SK-N-SH (cell line): ENCODE measurements at regions of chr3 and their contacts with region 1.

Region 1: DNA sequence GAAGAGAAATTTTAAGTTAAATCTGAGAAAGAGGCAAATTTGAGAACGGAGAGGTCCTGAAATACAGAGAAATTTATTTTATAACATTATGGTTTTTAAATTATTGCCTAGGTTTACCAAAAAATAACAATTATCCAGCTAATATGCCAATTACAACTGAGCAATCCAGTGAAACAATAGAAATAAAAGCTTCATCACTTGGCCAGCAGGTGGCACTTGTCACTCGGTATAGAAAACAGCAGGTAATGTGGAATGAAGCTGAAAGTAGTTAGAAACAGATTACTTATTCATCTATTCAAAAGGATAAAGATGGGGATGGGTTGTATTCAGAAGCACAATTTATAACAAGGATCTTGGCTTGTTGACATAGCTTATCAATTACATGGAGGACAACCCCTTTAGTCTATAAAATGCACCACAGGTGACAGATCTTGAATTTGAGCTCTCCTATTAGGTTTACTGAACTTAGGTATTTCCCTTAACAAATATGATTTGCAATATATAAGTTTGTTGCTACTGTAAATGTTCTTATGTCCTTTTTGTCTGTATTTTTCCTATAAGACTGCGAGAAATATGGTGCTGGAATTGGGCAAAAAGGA is 70.1 kb upstream of the GUCA1C start:
- DNase-seq: peak; percentile 27
- H3K4me3 ChIP-seq: no peak overlapping the region; a peak in 1 of 4 replicates
- H3K27ac ChIP-seq: no peak overlapping the region
- H3K4me1 ChIP-seq: no peaks in the 10 kb centered on the region
- H3K27me3 ChIP-seq: no peaks in the 10 kb centered on the region; the same call in 1 of the 2 replicates
- CTCF ChIP-seq: peak; percentile 86
- EP300 ChIP-seq: no peak
- RAD21 ChIP-seq: peak; percentile 74

Region 2: GRCh38 chr3:109005443-109005842 is 18.3 kb before region 1 on chr3:
- CTCF ChIA-PET with region 1: interaction called, 38 read pairs
- POLR2A ChIA-PET with region 1: no interaction called
- DNase-seq: no peak
- H3K4me3 ChIP-seq: no peak overlapping the region
- H3K27ac ChIP-seq: no peak overlapping the region
- H3K4me1 ChIP-seq: no peaks in the 10 kb centered on the region
- H3K27me3 ChIP-seq: no peaks in the 10 kb centered on the region
- CTCF ChIP-seq: no peak
- EP300 ChIP-seq: no peak
- RAD21 ChIP-seq: no peak

Region 3: DNA sequence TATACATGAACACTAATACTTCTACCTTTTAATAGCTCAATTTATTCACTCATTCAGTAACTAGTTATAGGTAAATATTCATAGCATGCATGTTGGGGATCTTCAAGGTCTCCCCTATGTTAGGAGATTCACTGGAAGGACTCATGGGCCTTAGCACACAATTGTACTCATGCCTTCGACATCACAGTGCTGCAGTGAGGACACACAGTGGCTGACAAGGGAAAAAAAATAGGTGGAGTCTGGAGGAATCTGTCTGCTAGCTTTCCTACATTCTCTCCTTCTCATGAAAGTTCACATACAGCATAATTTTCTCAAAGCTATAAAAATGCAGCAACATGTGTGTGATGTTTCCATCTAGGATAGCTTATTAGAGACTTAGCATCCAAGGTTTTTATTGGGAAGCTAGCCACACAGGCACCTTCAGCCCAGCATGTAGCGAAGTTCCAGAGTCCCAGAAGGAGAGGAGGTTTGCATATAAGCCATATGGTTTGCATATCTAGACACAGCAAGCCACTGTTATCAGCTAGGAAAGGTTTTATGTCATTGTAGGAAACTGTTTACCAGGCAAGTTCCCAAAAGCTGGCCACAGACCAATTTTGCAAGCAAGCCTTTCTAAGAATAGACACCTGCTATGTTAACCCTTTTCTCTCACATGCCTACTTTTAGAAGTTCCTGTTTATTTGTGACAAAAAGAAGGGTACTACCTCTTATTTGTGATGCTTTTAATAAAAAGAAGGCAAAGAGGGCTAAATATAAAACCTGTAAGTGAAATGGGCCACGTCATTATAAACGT is 47.8 kb after region 1 on chr3:
- CTCF ChIA-PET with region 1: interaction called, 14 read pairs
- POLR2A ChIA-PET with region 1: no interaction called
- DNase-seq: no peak
- H3K4me3 ChIP-seq: no peak overlapping the region
- H3K27ac ChIP-seq: no peak overlapping the region
- H3K4me1 ChIP-seq: no peaks in the 10 kb centered on the region
- H3K27me3 ChIP-seq: no peaks in the 10 kb centered on the region
- CTCF ChIP-seq: no peak
- EP300 ChIP-seq: no peak
- RAD21 ChIP-seq: 0 out of 2 replicates have a peak, but pooled peaks have one; percentile 17

Region 4: GRCh38 chr3:109091846-109092245 is 68.1 kb after region 1 on chr3:
- CTCF ChIA-PET with region 1: interaction called, 15 read pairs
- POLR2A ChIA-PET with region 1: no interaction called
- DNase-seq: no peak
- H3K4me3 ChIP-seq: no peak overlapping the region
- H3K27ac ChIP-seq: no peak overlapping the region
- H3K4me1 ChIP-seq: no peaks in the 10 kb centered on the region
- H3K27me3 ChIP-seq: no peaks in the 10 kb centered on the region; the same call in 1 of the 2 replicates
- CTCF ChIP-seq: no peak
- EP300 ChIP-seq: no peak
- RAD21 ChIP-seq: no peak